ENCODE measurements at regions of chr5 and their contacts with region 1.

Region 1: GRCh38 chr5:52139888-52140615 is 647.7 kb upstream of the ITGA1 start:
- DNase-seq: no peak
- ATAC-seq: no peak
- H3K4me3 ChIP-seq: no peak overlapping the region
- H3K27ac ChIP-seq: no peak overlapping the region
- H3K4me1 ChIP-seq: no peaks in the 10 kb centered on the region
- H3K27me3 ChIP-seq: no peaks in the 10 kb centered on the region
- CTCF ChIP-seq: no peak

Region 2: GRCh38 chr5:50889778-50890177 is 1250.3 kb before region 1 on chr5:
- intact Hi-C with region 1: loop called in 1 of 2 experiments (anchors 5 kb)
- DNase-seq: no peak
- ATAC-seq: no peak
- H3K4me3 ChIP-seq: no peak overlapping the region
- H3K27ac ChIP-seq: no peak overlapping the region
- H3K4me1 ChIP-seq: no peaks in the 10 kb centered on the region
- H3K27me3 ChIP-seq: no peaks in the 10 kb centered on the region
- CTCF ChIP-seq: no peak

Measured in psoas muscle (tissue), 8 donors.